ENCODE measurements at regions of chr13 and their contacts with region 1.

Region 1: DNA sequence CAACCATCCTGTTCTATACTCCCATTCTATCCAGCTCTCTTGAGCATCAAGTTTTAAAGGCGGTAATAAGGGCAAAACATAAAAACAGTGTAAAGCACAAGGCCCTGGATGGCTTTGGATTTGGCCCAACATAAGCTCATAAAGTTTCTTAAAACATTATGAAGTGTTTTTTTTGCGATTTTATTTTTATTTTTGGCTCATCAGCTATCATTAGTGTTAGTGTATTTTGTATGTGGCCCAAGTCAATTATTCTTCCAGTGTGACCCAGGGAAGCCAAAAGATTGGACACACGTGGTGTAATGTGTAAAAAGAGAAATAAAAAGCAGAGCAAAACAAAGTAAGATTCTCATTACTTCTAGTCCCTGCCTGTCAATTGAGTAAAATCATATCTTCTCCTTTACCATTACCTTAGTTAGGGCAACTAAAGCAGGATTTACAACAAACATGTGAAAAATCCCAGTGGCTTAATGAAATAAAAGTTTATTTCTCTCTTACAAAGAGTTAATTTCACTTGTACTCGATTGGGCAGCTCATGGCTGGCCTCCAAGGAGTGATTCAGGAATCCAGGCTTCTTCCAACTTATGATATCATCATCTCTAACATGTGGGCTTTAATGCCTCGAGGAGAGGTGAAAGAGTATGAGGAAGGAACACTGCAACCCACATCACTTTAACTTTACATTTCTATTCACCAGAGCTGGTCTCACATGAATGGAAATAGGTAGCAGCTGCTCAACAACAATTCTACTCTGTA is 725.2 kb upstream of the SLITRK1 start:
- DNase-seq: no peak
- ATAC-seq: no peak
- H3K4me3 ChIP-seq: no peak overlapping the region
- H3K4me3 Mint-ChIP-seq: no peak overlapping the region
- H3K27ac ChIP-seq: no peak overlapping the region
- H3K27ac Mint-ChIP-seq: no peak overlapping the region
- H3K4me1 ChIP-seq: no peaks in the 10 kb centered on the region
- H3K4me1 Mint-ChIP-seq: no peaks in the 10 kb centered on the region
- H3K27me3 ChIP-seq: no peaks in the 10 kb centered on the region
- H3K27me3 Mint-ChIP-seq: no peaks in the 10 kb centered on the region

Region 2: DNA sequence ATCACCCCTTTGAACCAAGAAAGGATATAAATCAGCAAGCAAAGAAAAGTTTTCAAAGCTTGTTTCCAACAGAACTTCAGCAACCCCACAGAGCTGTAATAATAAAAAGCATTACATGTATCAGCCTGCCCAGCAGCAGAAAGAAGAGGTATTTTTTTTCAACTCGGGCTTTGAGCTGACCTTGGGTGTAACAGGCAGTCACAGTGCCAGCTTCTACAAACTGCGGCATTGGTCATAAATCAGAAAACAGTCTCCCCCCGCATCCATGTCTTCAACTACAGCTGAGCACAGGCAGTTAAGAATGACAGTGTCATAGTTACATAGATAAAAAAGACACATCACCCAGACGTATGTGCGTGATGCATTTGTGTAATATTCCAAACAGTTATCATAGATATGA is 54.2 kb before region 1 on chr13:
- CTCF ChIA-PET with region 1: no interaction called
- POLR2A ChIA-PET with region 1: interaction called in 1 of 2 experiments, 13 read pairs
- DNase-seq: no peak
- ATAC-seq: no peak
- H3K4me3 ChIP-seq: no peak overlapping the region
- H3K4me3 Mint-ChIP-seq: no peak overlapping the region
- H3K27ac ChIP-seq: no peak overlapping the region
- H3K27ac Mint-ChIP-seq: no peak overlapping the region
- H3K4me1 ChIP-seq: no peaks in the 10 kb centered on the region
- H3K4me1 Mint-ChIP-seq: no peaks in the 10 kb centered on the region
- H3K27me3 ChIP-seq: no peaks in the 10 kb centered on the region
- H3K27me3 Mint-ChIP-seq: no peaks in the 10 kb centered on the region